Naive thymus-derived CD4-positive, alpha-beta T cell (primary cell): ENCODE measurements at regions of chr5 and their contacts with region 1.

Region 1: DNA sequence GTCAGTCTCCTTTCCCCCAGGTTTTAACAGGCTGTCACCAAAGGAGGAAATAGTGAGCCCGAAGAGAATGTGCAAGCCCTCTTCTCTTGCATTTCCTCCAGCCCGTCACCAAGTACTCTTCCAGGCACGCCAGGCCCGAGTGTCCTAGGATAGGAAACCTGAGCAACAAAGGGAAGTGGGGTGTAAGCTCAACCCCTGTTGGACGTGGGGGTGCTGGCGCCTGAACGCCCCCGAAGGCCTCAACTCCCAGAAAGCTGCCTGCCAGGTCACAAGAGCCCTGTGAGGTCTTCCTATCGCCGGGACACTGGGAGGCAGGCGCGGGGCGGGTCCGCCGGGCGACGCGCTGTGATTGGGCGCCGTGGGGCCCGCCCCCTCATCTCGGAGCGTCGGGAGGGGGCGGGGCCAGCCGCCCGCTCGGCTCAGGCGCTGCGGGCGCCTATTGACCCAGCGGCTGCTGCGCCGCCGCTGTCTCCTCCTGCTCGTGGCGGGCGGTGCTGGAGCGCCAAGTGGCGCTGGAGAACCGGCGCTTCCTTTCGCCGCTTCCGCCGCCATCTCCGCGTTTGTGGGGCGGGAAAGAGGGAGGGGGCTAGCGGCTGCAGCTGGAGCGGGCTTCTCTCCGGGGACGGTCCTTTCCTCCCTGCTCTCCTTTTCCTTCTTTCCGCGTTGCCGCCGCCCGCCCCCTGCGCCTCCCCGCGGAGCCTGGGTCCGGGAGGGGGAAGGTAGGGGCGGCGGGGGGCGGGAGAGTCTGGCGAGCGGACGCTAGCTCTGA is 572 bp upstream of the MAN2A1 start:
- DNase-seq: peak; percentile 69 to 84 (median 78)
- ATAC-seq: peak; percentile 88
- H3K4me3 ChIP-seq: peak overlapping the region; percentile 94
- H3K4me3 Mint-ChIP-seq: peak overlapping the region; percentile 83 to 96 (median 92)
- H3K27ac ChIP-seq: peak overlapping the region; percentile 93
- H3K27ac Mint-ChIP-seq: peak overlapping the region; percentile 45 to 94 (median 90)
- H3K4me1 ChIP-seq: peaks cover 9 to 13% of the 10 kb centered on the region in 2 donors
- H3K4me1 Mint-ChIP-seq: peaks cover 14 to 36% (median 33%) of the 10 kb centered on the region in 7 donors
- H3K27me3 ChIP-seq: no peaks in the 10 kb centered on the region
- H3K27me3 Mint-ChIP-seq: peaks cover 0 to 3% (median 0%) of the 10 kb centered on the region in 5 donors

Region 2: DNA sequence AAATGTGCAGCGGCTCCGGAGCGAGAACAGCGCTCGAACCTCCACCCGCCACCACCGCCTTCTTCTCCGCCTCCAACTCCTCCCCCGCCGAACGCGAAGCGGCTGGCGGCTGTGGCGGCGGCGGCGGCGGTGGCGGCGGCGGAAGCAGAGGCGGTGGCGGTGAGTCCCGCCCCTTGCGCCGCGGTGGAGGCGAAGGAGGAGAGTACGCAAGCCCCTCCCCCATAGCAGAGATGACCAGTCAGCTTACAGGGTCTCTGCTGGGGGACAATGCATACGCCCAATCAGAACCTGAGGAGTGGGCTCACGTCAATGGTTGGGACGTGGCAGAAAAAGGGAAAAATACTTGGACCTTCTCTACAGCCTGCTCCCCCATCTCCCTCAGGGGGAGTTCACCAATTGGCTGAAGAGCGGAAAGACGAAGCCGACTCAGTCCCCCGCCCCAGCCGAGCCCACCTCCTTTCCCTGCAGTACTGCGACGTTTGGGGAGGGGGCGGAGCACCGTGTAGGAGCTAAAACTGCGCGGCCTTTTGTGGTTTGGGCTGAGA is 279.2 kb before region 1 on chr5 and contains the start of gene PJA2:
- CTCF ChIA-PET with region 1: no interaction called
- POLR2A ChIA-PET with region 1: interaction called, 18 read pairs
- intact Hi-C with region 1: loop called (anchors 1 kb)
- DNase-seq: peak; percentile 94 to 98 (median 98)
- ATAC-seq: peak; percentile 88
- H3K4me3 ChIP-seq: peak within 1 kb of the TSS; percentile 77
- H3K4me3 Mint-ChIP-seq: peak within 1 kb of the TSS; percentile 89 to 100 (median 98)
- H3K27ac ChIP-seq: peak within 1 kb of the TSS; percentile 99
- H3K27ac Mint-ChIP-seq: peak within 1 kb of the TSS; percentile 97 to 100 (median 99)
- H3K4me1 ChIP-seq: peaks cover 8 to 19% of the 10 kb centered on the region in 2 donors
- H3K4me1 Mint-ChIP-seq: peaks cover 24 to 50% (median 42%) of the 10 kb centered on the region in 7 donors
- H3K27me3 ChIP-seq: no peaks in the 10 kb centered on the region
- H3K27me3 Mint-ChIP-seq: peaks cover 0 to 2% (median 0%) of the 10 kb centered on the region in 5 donors
- total RNA-seq, gene PJA2: 59.9 to 89.9 (median 76.2) TPM

Region 3: GRCh38 chr5:109725135-109725534 is 36.0 kb after region 1 on chr5:
- CTCF ChIA-PET with region 1: no interaction called
- POLR2A ChIA-PET with region 1: no interaction called
- intact Hi-C with region 1: loop called in 1 of 2 experiments (anchors 5 kb)
- DNase-seq: no peak
- ATAC-seq: no peak
- H3K4me3 ChIP-seq: no peak overlapping the region
- H3K4me3 Mint-ChIP-seq: no peak overlapping the region
- H3K27ac ChIP-seq: no peak overlapping the region
- H3K27ac Mint-ChIP-seq: peak overlapping the region in 3 of 9 donors; percentile 14 to 80 (median 71)
- H3K4me1 ChIP-seq: no peaks in the 10 kb centered on the region
- H3K4me1 Mint-ChIP-seq: peaks cover 3 to 59% (median 55%) of the 10 kb centered on the region in 7 donors
- H3K27me3 ChIP-seq: no peaks in the 10 kb centered on the region
- H3K27me3 Mint-ChIP-seq: no peaks in the 10 kb centered on the region

Region 4: GRCh38 chr5:109921735-109922380 is 232.7 kb after region 1 on chr5:
- CTCF ChIA-PET with region 1: interaction called, 3 read pairs
- POLR2A ChIA-PET with region 1: interaction called, 46 read pairs
- intact Hi-C with region 1: loop called (anchors 1 to 2 kb)
- DNase-seq: peak; percentile 13 to 90 (median 84)
- ATAC-seq: peak; percentile 92
- H3K4me3 ChIP-seq: peak overlapping the region; percentile 1
- H3K4me3 Mint-ChIP-seq: peak overlapping the region; percentile 75 to 91 (median 82)
- H3K27ac ChIP-seq: peak overlapping the region; percentile 78
- H3K27ac Mint-ChIP-seq: peak overlapping the region; percentile 89 to 100 (median 97)
- H3K4me1 ChIP-seq: peaks cover 34 to 45% of the 10 kb centered on the region in 2 donors
- H3K4me1 Mint-ChIP-seq: peaks cover 17 to 76% (median 62%) of the 10 kb centered on the region in 7 donors
- H3K27me3 ChIP-seq: no peaks in the 10 kb centered on the region
- H3K27me3 Mint-ChIP-seq: no peaks in the 10 kb centered on the region

Region 5: GRCh38 chr5:110258460-110259216 is 569.5 kb after region 1 on chr5:
- CTCF ChIA-PET with region 1: no interaction called
- POLR2A ChIA-PET with region 1: no interaction called
- intact Hi-C with region 1: no loop called
- DNase-seq: no peak
- ATAC-seq: no peak
- H3K4me3 ChIP-seq: no peak overlapping the region
- H3K4me3 Mint-ChIP-seq: no peak overlapping the region
- H3K27ac ChIP-seq: no peak overlapping the region
- H3K27ac Mint-ChIP-seq: no peak overlapping the region
- H3K4me1 ChIP-seq: no peaks in the 10 kb centered on the region
- H3K4me1 Mint-ChIP-seq: no peaks in the 10 kb centered on the region
- H3K27me3 ChIP-seq: no peaks in the 10 kb centered on the region
- H3K27me3 Mint-ChIP-seq: no peaks in the 10 kb centered on the region

Region 6: GRCh38 chr5:110342683-110343082 is 653.5 kb after region 1 on chr5:
- CTCF ChIA-PET with region 1: interaction called, 6 read pairs
- POLR2A ChIA-PET with region 1: no interaction called
- intact Hi-C with region 1: loop called in 1 of 2 experiments (anchors 1 kb)
- DNase-seq: no peak
- ATAC-seq: no peak
- H3K4me3 ChIP-seq: no peak overlapping the region
- H3K4me3 Mint-ChIP-seq: no peak overlapping the region
- H3K27ac ChIP-seq: no peak overlapping the region
- H3K27ac Mint-ChIP-seq: no peak overlapping the region
- H3K4me1 ChIP-seq: no peaks in the 10 kb centered on the region
- H3K4me1 Mint-ChIP-seq: no peaks in the 10 kb centered on the region
- H3K27me3 ChIP-seq: no peaks in the 10 kb centered on the region
- H3K27me3 Mint-ChIP-seq: no peaks in the 10 kb centered on the region

Region 7: DNA sequence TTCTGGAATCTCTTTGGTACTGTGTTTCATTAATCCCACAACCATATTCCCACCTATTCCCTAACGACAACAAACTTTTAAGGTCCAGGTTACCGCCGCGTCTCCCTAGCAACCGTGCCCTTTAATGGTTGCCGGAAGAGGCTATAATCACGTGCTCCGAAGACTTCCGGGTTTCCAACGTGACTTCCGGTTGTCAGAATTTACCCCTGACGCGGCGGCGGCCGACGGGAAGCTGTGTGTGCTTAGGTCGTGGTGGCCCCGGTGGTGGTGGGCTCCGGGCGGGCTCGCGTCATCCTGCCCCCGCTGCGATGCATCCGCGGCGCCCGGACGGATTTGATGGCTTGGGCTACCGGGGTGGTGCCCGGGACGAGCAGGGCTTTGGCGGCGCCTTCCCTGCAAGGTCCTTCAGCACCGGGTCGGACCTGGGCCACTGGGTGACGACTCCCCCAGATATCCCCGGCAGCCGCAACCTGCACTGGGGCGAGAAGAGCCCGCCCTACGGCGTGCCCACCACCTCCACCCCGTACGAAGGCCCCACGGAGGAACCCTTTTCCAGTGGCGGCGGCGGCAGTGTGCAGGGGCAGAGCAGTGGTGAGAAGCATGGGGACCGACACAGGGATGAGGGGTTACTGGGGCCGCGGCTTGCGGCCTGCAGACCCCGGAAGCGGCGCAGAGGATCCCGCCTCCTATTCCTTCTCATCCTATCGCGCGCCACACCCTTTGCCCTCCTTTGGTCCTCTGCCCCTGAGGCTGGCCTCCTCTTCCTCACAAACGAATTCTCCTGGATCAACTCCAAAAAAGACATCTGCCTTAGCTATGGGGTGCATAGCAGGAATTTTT is 1049.9 kb after region 1 on chr5 and contains the start of gene SLC25A46:
- CTCF ChIA-PET with region 1: no interaction called
- POLR2A ChIA-PET with region 1: interaction called, 3 read pairs
- intact Hi-C with region 1: loop called (anchors 1 to 2 kb)
- DNase-seq: peak; percentile 75 to 92 (median 91)
- ATAC-seq: peak; percentile 92
- H3K4me3 ChIP-seq: peak within 1 kb of the TSS; percentile 96
- H3K4me3 Mint-ChIP-seq: peak within 1 kb of the TSS; percentile 90 to 100 (median 96)
- H3K27ac ChIP-seq: peak within 1 kb of the TSS; percentile 86
- H3K27ac Mint-ChIP-seq: peak within 1 kb of the TSS; percentile 91 to 100 (median 96)
- H3K4me1 ChIP-seq: peaks cover 4 to 15% of the 10 kb centered on the region in 2 donors
- H3K4me1 Mint-ChIP-seq: peaks cover 14 to 45% (median 34%) of the 10 kb centered on the region in 7 donors
- H3K27me3 ChIP-seq: no peaks in the 10 kb centered on the region
- H3K27me3 Mint-ChIP-seq: peaks cover 4 to 19% (median 6%) of the 10 kb centered on the region in 5 donors
- total RNA-seq, gene SLC25A46: 23.8 to 50.5 (median 35.9) TPM

Region 8: DNA sequence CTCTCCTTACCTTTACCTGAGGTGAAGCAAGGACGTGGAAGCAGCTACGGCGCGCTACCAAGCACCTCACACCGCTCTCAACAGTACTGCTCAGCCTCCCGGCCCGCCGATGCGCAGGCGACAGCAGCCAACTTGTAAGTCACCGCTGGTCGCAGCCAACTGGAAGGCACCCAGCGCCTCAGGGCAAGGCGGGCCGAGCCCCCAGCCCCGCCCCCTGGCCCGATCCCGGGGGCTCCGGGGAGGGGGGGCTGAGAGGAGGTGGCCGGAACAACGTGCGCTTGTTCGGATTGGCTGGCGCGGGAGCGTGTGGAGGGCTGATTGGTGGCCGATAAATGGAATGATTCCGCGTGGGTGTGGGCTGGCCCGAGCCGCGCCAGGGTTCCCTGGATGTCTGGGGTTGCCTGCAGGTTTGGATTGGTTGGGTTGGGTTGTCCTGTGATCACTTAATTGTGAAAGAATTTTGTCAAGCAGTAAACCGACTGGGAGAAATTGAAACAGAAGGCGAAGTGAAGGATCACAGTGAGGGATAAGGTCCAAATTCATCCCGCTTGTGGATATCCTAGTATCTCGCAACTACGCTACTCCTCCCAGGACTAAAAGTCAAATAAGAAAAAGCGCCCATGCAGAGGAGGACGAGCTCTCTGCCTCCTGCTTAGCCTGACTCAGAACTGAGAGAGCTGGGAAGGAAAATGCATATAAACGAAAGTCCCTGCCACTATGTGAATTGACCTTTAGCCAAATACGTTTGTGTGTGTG is 1823.4 kb after region 1 on chr5 and contains the start of gene STARD4:
- CTCF ChIA-PET with region 1: no interaction called
- POLR2A ChIA-PET with region 1: interaction called, 7 read pairs
- intact Hi-C with region 1: loop called (anchors 1 to 10 kb)
- DNase-seq: peak; percentile 79 to 94 (median 92)
- ATAC-seq: peak; percentile 97
- H3K4me3 ChIP-seq: peak within 1 kb of the TSS; percentile 81
- H3K4me3 Mint-ChIP-seq: peak within 1 kb of the TSS; percentile 91 to 100 (median 98)
- H3K27ac ChIP-seq: peak within 1 kb of the TSS; percentile 73
- H3K27ac Mint-ChIP-seq: peak within 1 kb of the TSS; percentile 90 to 98 (median 94)
- H3K4me1 ChIP-seq: peaks cover 0 to 14% of the 10 kb centered on the region in 2 donors
- H3K4me1 Mint-ChIP-seq: peaks cover 17 to 53% (median 28%) of the 10 kb centered on the region in 7 donors
- H3K27me3 ChIP-seq: no peaks in the 10 kb centered on the region
- H3K27me3 Mint-ChIP-seq: no peaks in the 10 kb centered on the region
- total RNA-seq, gene STARD4: 11.1 to 70.8 (median 17.1) TPM